Mammary epithelial cell (primary cell): ENCODE measurements at regions of chr11 and their contacts with region 1.

Region 1: DNA sequence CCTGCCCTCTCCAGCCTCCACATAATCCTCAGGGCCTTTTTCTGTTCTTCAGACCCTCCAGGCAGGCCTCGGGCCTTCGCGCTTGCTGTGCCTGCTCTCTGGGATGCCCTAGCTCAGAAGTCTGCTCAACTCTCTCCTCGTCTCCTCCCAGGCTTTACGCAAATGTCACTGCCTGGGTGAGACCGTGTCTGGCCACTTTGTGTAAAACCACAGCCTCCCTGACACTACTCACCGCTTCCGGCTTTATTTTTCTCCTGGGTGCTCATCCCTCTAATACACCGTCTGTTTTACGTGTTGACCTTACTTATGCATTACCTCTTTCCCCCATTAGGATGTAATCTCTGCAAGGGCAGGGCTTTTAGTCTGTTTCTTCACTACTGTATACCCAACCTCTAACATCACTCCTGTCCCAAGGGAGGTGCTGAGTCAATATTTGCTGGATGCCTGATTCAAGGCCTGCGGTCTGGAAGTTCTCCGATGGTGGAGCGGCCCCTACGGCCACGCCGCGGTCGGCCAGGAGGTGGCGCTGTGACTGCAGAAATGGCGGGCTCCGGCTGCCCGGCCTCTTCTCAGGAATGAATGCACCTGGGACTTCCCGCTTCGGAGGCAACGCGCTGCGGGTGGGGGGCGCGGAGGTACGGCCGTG is 58.2 kb upstream of the THY1 start:
- DNase-seq: peak; percentile 78
- H3K4me3 ChIP-seq: no peak overlapping the region
- H3K27ac ChIP-seq: no peak overlapping the region
- H3K4me1 ChIP-seq: no peaks in the 10 kb centered on the region
- H3K27me3 ChIP-seq: no peaks in the 10 kb centered on the region
- CTCF ChIP-seq: peak; percentile 91 to 97

Region 2: GRCh38 chr11:119505861-119506260 is 24.7 kb after region 1 on chr11:
- CTCF ChIA-PET with region 1: no interaction called
- dilution Hi-C with region 1: no loop called
- in situ Hi-C with region 1: no loop called
- intact Hi-C with region 1: no loop called
- DNase-seq: no peak
- H3K4me3 ChIP-seq: no peak overlapping the region
- H3K27ac ChIP-seq: no peak overlapping the region
- H3K4me1 ChIP-seq: no peaks in the 10 kb centered on the region
- H3K27me3 ChIP-seq: no peaks in the 10 kb centered on the region
- CTCF ChIP-seq: no peak

Region 3: GRCh38 chr11:119533921-119534736 is 53.0 kb after region 1 on chr11:
- CTCF ChIA-PET with region 1: no interaction called
- dilution Hi-C with region 1: no loop called
- in situ Hi-C with region 1: no loop called
- intact Hi-C with region 1: loop called (anchors 1 kb)
- DNase-seq: peak; percentile 57
- H3K4me3 ChIP-seq: no peak overlapping the region
- H3K27ac ChIP-seq: no peak overlapping the region
- H3K4me1 ChIP-seq: no peaks in the 10 kb centered on the region
- H3K27me3 ChIP-seq: peaks cover 1% of the 10 kb centered on the region
- CTCF ChIP-seq: peak; percentile 62 to 95

Region 4: DNA sequence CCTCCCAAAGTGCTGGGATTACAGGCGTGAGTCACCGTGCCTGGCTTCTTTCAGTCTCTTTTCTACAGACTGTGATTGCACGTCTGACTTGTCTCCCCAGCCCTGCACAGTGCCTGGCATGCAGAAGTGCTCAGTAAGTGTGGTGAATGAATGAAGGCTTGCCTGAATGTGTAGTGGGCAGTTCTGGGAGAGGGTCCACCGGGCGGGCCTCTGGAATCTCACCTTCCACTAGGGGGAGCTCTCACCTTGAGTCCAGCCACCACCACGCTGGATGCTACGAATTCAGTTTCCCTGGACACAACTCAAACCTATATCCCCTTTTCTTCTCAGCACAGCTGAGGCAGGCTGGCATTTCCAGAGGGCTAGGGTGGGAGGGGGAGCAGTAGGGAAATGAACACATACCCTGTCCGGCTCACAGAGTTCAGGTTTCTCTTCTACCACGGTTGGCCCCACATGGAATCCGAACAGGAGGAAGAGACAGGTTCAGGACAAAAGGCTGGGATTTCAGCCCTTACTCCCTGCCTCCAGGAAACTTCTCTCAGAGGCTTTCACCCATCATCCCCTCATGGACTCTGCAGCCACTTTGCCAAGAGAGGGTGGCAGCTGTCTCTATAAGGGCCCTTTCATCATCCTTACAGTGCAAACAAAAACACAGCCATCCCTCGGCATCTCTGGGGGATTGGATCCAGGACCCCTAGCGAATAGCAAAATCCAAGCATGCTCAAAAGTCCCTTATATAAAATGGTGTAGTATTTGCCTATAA is 161.0 kb after region 1 on chr11:
- CTCF ChIA-PET with region 1: no interaction called
- dilution Hi-C with region 1: no loop called
- in situ Hi-C with region 1: no loop called
- intact Hi-C with region 1: loop called (anchors 1 kb)
- DNase-seq: peak; percentile 15
- H3K4me3 ChIP-seq: no peak overlapping the region
- H3K27ac ChIP-seq: no peak overlapping the region
- H3K4me1 ChIP-seq: no peaks in the 10 kb centered on the region
- H3K27me3 ChIP-seq: no peaks in the 10 kb centered on the region
- CTCF ChIP-seq: peak; percentile 59 to 84

Region 5: GRCh38 chr11:119902656-119903231 is 421.6 kb after region 1 on chr11:
- CTCF ChIA-PET with region 1: no interaction called
- dilution Hi-C with region 1: no loop called
- in situ Hi-C with region 1: no loop called
- intact Hi-C with region 1: no loop called
- DNase-seq: no peak
- H3K4me3 ChIP-seq: no peak overlapping the region
- H3K27ac ChIP-seq: no peak overlapping the region
- H3K4me1 ChIP-seq: no peaks in the 10 kb centered on the region
- H3K27me3 ChIP-seq: peaks cover 15% of the 10 kb centered on the region
- CTCF ChIP-seq: no peak

Region 6: DNA sequence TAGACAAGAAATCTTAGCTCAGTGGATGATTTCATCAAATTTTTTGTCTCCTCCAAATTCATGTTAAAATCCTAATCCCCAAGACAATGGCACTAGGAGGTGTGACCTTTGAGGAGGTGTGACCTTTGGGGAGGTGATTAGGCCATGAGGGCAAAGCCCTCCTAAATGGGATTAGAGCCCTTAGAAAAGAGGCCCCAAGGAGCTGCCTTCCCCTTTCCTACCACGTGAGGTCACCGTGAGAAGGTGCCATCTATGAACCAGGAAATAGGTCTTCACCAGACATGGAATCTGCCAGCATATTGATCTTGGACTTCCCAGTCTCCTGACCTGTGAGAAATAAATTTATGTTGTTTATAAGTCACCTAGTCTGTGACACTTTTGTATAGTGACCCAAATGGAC is 518.1 kb after region 1 on chr11:
- CTCF ChIA-PET with region 1: no interaction called
- dilution Hi-C with region 1: no loop called
- in situ Hi-C with region 1: no loop called
- intact Hi-C with region 1: loop called (anchors 5 kb)
- DNase-seq: peak; percentile 6
- H3K4me3 ChIP-seq: no peak overlapping the region
- H3K27ac ChIP-seq: no peak overlapping the region
- H3K4me1 ChIP-seq: peaks cover 9% of the 10 kb centered on the region
- H3K27me3 ChIP-seq: no peaks in the 10 kb centered on the region
- CTCF ChIP-seq: peak; percentile 40 to 56

Region 7: GRCh38 chr11:120079750-120080490 is 598.8 kb after region 1 on chr11:
- CTCF ChIA-PET with region 1: no interaction called
- dilution Hi-C with region 1: no loop called
- in situ Hi-C with region 1: loop called in 1 of 2 experiments (anchors 25 kb)
- intact Hi-C with region 1: no loop called
- DNase-seq: no peak
- H3K4me3 ChIP-seq: no peak overlapping the region
- H3K27ac ChIP-seq: no peak overlapping the region
- H3K4me1 ChIP-seq: no peaks in the 10 kb centered on the region
- H3K27me3 ChIP-seq: no peaks in the 10 kb centered on the region
- CTCF ChIP-seq: peak; percentile 16 to 44